GM10248 (cell line): ENCODE measurements at regions of chr5 and their contacts with region 1.

Region 1: DNA sequence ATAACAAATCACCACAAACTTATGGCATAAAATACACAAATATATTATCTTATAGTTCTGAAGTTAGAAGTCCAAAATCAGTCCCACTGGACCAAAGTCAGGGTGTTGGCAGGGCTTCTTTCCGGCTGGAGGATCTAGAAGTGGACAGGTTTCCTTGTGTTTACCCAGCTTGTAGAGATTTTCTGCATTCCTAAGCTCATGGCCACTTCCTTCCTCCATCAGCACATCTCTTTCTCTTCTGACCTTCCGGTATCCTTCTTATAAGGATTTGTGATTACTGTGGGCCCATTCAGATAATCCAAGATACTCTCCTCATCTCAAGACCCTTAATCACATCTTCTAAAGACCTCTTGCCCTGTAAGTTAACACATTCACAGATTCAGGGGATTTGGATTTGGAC is 97.6 kb downstream of the RAB3C start:
- DNase-seq: no peak
- CTCF ChIP-seq: no peak

Region 2: DNA sequence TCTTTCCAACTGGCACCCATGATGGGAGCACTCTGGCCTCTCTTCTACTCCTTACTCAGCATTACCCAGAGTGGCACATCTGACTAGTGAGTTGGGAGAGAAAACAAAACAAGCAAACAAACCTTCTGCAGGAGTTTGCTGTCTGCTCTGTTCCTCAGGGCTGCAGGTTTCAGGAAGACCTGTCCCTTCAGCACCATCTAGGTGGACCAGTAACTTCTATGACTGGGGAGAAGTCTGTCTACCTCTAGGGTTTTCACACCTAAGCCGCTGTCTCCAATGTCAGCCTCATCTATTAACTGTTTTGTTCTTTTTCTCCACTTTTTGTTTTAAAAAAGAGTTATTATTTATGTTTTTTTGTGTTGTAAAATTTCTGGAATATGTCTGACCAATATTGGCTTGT is 39.0 kb before region 1 on chr5:
- CTCF ChIA-PET with region 1: no interaction called
- POLR2A ChIA-PET with region 1: no interaction called
- DNase-seq: no peak
- CTCF ChIP-seq: no peak

Region 3: DNA sequence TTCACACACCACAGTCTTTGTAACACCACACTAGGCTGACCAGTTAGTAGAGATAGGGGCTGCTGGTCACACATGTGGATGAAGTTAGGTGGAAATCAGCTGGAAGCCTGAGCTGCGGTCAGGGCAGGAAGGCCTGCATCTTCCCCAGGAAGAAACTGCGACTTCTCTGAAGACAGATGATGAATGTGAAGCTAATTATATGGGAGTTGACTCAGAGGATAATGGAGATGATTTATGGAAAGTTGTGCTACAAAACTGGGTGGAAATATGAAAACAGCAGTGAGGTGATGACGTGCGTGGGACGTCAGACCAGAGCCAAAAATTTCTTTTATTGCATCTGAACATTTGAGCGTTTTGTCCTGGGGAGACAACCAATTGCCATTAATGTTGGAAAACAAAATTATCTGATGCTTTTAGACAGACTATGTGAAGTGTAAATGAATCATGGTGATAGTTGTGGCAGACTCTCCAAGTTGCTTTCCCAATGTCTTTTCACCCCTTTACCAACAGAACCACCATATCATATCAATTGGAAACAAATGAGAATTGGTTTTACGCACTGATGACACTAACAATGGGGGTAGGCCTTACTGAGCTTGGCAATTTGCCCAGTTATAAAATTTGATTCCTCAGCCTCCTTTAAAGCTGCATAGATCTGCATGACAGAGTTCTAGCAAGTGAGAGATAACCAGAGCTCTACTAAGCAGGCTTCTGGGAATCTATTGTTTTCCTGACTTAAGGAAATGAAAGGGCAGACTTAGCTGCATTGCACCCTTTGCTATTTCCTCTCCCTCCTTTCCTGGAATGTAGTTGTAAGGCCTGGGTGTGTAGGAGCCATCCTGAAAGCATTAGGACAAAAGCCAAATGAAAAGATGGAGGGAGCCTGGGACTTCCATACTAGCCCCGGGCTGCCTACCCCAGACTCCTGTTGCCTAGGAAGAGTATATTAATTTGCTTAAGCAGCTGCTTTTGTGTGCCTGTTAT is 13.6 kb before region 1 on chr5:
- CTCF ChIA-PET with region 1: interaction called, 20 read pairs
- POLR2A ChIA-PET with region 1: no interaction called
- DNase-seq: no peak
- CTCF ChIP-seq: no peak